Activated CD8-positive, alpha-beta memory T cell treated with anti-CD3 and anti-CD28 coated beads, Interleukin-2, amount 10 ng/mL, durations not matched to agents 7 days and 5 days (primary cell): ENCODE measurements at regions of chr10 and their contacts with region 1.

Region 1: DNA sequence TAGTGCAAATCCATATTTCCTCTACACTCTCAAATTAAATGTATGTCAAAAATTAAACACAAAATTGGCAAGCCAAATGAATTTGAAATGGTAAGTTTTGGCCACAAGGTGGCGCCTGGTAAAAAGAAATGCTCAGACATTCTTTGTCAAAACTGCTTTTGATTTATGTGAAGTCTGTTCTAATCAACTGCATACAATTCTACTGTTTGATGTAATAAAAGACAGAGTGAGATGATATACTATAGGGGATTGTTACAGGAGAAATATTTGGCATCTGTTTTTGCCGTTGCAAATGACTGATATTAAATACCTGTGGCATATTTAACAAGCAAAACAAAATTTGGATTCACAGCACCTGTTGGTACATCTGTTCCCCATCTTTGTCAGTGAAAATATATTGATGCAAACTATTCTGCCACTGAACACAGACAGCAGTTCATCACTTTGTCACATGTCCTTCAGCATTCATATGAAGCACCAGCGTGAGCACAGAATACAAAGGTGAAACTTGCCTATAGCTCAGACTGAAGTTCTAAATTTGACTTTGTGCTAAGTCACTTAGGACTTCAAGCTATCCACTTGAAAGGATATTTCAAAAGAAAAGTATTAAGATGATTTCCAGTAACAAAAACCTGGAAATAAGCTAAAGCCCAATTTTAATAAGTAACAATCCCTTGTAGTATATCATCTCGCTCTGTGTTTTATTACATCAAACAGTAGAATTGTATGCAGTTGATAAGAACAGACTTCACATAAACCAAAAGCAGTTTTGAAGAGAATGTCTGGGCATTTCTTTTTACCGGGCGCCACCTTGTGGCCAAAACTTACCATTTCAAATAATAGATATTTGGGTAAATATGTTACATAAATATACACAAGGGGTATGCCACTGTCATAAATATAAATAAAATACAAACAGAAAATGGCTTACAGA is 10.2 kb upstream of the CH25H start:
- DNase-seq: peak; percentile 76
- ATAC-seq: peak; percentile 53
- H3K4me3 Mint-ChIP-seq: no peak overlapping the region
- H3K27ac Mint-ChIP-seq: peak overlapping the region; percentile 72
- H3K4me1 Mint-ChIP-seq: peaks cover 15% of the 10 kb centered on the region
- H3K27me3 Mint-ChIP-seq: no peaks in the 10 kb centered on the region

Region 2: GRCh38 chr10:89207181-89207800 is 10.0 kb before region 1 on chr10 and contains the start of gene CH25H:
- CTCF ChIA-PET with region 1: interaction called, 21 read pairs
- DNase-seq: peak; percentile 64
- ATAC-seq: peak; percentile 72
- H3K4me3 Mint-ChIP-seq: peak within 1 kb of the TSS; percentile 73
- H3K27ac Mint-ChIP-seq: peak within 1 kb of the TSS; percentile 38
- H3K4me1 Mint-ChIP-seq: peaks cover 19% of the 10 kb centered on the region
- H3K27me3 Mint-ChIP-seq: peaks cover 30% of the 10 kb centered on the region
- total RNA-seq, gene CH25H: not detected

Region 3: DNA sequence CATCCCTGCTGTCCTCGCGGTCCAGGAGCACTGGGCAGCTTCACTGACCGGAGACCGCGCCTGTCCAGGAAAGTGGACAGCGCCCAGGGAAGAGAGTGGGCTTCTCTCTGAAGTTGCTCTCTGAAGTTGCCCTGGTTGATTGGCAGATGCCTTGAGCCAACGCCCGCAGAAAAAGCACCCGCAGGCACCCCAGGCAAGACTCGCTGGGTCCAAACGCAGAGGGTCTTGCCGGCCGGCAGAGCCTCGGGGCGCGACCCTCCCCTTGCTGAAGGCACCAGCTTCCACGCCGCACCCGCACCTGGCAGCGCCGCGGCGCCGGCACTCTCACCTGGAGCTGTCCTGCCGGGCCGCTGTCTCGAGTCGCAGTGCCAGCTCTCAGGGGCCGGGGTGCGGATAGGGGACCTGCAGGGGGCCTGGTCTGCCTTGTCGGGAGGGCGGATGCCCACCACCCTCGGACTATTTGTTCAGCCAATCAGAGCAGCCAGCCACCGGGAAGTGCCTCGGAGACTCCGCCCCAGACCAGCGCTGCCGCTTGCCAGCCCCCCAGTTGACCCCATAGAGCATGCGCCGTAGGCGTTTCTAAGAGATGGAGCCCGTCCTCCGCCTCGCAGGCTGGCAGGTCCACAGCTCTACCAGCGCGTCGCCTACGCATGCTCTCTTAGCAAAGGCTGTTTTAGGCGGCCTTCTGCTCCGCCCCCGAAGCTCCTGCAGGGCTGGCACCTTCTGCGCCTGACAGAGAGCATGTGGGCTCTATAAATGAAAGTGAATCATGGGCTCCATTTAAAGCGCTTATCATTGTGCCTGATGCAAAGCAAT is 34.3 kb after region 1 on chr10 and contains the start of gene LIPA:
- CTCF ChIA-PET with region 1: interaction called, 12 read pairs
- DNase-seq: peak; percentile 97
- ATAC-seq: peak; percentile 98
- H3K4me3 Mint-ChIP-seq: peak within 1 kb of the TSS; percentile 88
- H3K27ac Mint-ChIP-seq: peak within 1 kb of the TSS; percentile 82
- H3K4me1 Mint-ChIP-seq: peaks cover 28% of the 10 kb centered on the region
- H3K27me3 Mint-ChIP-seq: peaks cover 14% of the 10 kb centered on the region
- total RNA-seq, gene LIPA: 24.0 to 28.5 TPM

Region 4: GRCh38 chr10:89296220-89296648 is 78.9 kb after region 1 on chr10:
- CTCF ChIA-PET with region 1: no interaction called
- DNase-seq: no peak
- ATAC-seq: no peak
- H3K4me3 Mint-ChIP-seq: peak overlapping the region; percentile 10
- H3K27ac Mint-ChIP-seq: peak overlapping the region; percentile 63
- H3K4me1 Mint-ChIP-seq: peaks cover 38% of the 10 kb centered on the region
- H3K27me3 Mint-ChIP-seq: peaks cover 15% of the 10 kb centered on the region

Region 5: GRCh38 chr10:89458291-89458690 is 241.0 kb after region 1 on chr10:
- CTCF ChIA-PET with region 1: no interaction called
- DNase-seq: no peak
- ATAC-seq: no peak
- H3K4me3 Mint-ChIP-seq: no peak overlapping the region
- H3K27ac Mint-ChIP-seq: no peak overlapping the region
- H3K4me1 Mint-ChIP-seq: no peaks in the 10 kb centered on the region
- H3K27me3 Mint-ChIP-seq: peaks cover 38% of the 10 kb centered on the region